ENCODE measurements at regions of chr17 and their contacts with region 1.

Region 1: GRCh38 chr17:81294856-81295680 is at the start of gene SLC38A10:
- DNase-seq: peak; percentile 69 to 94
- H3K4me3 ChIP-seq: peak within 1 kb of the TSS; percentile 92
- H3K4me1 ChIP-seq: peaks cover 12% of the 10 kb centered on the region
- H3K27me3 ChIP-seq: no peaks in the 10 kb centered on the region

Region 2: DNA sequence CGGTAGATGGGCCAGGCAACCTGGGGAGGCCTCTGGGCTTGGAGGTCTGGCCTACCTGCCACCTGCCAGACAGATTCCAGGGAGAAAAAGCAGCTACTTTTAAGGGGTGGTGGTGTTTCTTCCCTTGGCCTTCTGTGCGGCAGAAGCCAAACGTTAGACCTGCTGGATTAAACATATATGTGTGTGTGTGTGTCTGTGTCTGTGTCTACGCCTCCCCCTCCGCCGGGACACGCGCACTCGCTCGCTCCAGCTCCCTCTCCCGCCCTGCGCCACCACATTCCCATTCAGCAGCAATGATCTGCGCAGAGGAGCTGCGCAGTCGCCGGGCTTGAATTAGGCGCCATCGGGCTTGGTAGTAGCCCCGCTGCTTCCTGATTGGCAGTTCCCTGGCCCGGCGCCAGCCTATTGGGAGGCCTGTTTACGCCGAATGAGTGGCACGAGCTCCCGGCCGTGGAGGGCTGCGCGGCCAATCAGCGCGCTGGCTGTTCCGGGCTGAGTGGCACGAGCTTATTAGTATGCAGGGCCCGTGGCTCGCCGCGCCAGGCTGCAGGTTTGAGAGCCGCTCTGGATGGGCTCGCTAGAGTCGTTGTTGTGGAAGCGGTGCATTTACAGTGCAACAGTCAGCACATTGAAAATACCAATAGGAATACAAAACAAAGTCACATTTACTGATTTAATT is 100.0 kb after region 1 on chr17 and contains the start of gene BAHCC1:
- in situ Hi-C with region 1: loop called (anchors 5 kb)
- DNase-seq: peak; percentile 99 to 100
- H3K4me3 ChIP-seq: peak within 1 kb of the TSS; percentile 67
- H3K4me1 ChIP-seq: peaks cover 17% of the 10 kb centered on the region
- H3K27me3 ChIP-seq: no peaks in the 10 kb centered on the region

Region 3: DNA sequence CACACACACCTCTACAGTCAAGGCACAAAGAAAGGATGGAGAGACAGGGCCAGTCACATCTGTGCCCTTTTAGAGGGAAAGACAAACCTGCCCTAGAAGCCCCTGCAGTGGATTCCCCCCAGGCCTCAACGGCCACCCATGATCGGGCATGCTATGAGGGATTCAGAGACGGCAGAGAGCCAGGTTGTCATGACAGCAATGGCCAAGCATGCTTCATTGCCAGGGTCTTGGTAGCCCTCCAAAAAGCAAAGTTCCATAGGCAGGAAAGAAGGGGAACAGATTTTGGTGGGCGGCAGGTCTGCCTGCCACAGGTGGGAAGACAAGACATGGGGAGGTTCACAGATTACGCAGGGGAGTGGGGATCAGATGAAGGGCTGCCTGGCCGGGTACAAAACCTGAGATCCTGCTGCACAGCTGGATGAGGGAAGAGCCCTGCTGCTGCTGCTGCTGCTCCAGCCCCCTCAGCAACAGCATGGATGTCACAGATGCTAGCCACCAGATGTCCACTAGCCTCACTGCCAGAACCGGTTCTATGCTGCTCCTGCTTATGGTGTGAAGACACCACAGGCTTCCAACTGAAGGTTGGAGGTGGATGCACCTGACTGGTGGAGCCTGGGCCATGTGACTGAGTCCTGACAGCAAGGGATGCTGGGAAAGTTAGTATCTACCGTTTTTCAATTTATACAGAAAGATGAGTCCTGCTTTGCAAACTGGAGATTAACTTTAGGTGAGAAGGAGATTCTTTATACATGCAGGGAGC is 199.7 kb after region 1 on chr17:
- in situ Hi-C with region 1: no loop called
- DNase-seq: no peak
- H3K4me3 ChIP-seq: no peak overlapping the region
- H3K4me1 ChIP-seq: peaks cover 2% of the 10 kb centered on the region
- H3K27me3 ChIP-seq: no peaks in the 10 kb centered on the region

Measured in HAP-1 (cell line).